MCF 10A (cell line): ENCODE measurements at regions of chr11 and their contacts with region 1.

Region 1: GRCh38 chr11:103108933-103109817 is at the start of gene DYNC2H1:
- DNase-seq: peak; percentile 87
- H3K4me3 Mint-ChIP-seq: peak within 1 kb of the TSS; percentile 82
- H3K27ac Mint-ChIP-seq: peak within 1 kb of the TSS; percentile 95
- H3K4me1 Mint-ChIP-seq: peaks cover 13% of the 10 kb centered on the region
- H3K27me3 Mint-ChIP-seq: no peaks in the 10 kb centered on the region
- CTCF ChIP-seq: peak; percentile 29
- total RNA-seq, gene DYNC2H1: 23.0 and 23.5 TPM in 2 replicates

Region 2: GRCh38 chr11:102868339-102868738 is 240.8 kb before region 1 on chr11:
- CTCF ChIA-PET with region 1: no interaction called
- POLR2A ChIA-PET with region 1: no interaction called
- intact Hi-C with region 1: no loop called
- DNase-seq: peak; percentile 51
- H3K4me3 Mint-ChIP-seq: no peak overlapping the region
- H3K27ac Mint-ChIP-seq: no peak overlapping the region
- H3K4me1 Mint-ChIP-seq: no peaks in the 10 kb centered on the region
- H3K27me3 Mint-ChIP-seq: no peaks in the 10 kb centered on the region
- CTCF ChIP-seq: no peak

Region 3: DNA sequence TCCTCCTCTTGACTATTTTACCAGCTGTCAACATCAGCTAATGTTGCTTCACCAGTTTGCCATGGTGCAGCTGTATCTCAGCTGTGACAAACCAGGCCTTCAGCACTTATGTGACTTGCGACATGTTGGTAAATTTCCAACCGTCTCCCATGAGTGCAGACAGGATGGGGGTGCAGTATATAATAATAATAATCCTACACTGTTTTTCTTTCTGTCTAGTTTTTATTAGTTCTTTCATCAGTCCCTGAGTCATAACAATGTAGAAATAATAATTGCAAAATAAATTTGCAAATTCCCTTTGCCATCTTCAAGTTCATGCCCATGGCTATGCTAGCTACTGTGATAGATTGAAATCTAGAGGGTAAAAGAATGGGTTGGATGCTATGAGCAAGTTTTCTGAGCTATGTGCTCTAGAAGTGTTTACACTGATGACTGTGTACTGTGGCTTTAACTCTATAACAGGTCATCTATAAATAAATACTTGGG is 158.5 kb before region 1 on chr11:
- CTCF ChIA-PET with region 1: no interaction called
- POLR2A ChIA-PET with region 1: no interaction called
- intact Hi-C with region 1: no loop called
- DNase-seq: peak; percentile 76
- H3K4me3 Mint-ChIP-seq: no peak overlapping the region
- H3K27ac Mint-ChIP-seq: peak overlapping the region; percentile 37
- H3K4me1 Mint-ChIP-seq: peaks cover 10% of the 10 kb centered on the region
- H3K27me3 Mint-ChIP-seq: no peaks in the 10 kb centered on the region
- CTCF ChIP-seq: no peak

Region 4: GRCh38 chr11:103085758-103086365 is 23.3 kb before region 1 on chr11:
- CTCF ChIA-PET with region 1: interaction called, 44 read pairs
- POLR2A ChIA-PET with region 1: interaction called, 300 read pairs
- intact Hi-C with region 1: no loop called
- DNase-seq: no peak
- H3K4me3 Mint-ChIP-seq: no peak overlapping the region
- H3K27ac Mint-ChIP-seq: peak overlapping the region; percentile 71
- H3K4me1 Mint-ChIP-seq: peaks cover 26% of the 10 kb centered on the region
- H3K27me3 Mint-ChIP-seq: no peaks in the 10 kb centered on the region
- CTCF ChIP-seq: no peak

Region 5: GRCh38 chr11:103091801-103092524 is 17.2 kb before region 1 on chr11 and contains the start of gene DCUN1D5:
- CTCF ChIA-PET with region 1: interaction called, 44 read pairs
- POLR2A ChIA-PET with region 1: interaction called, 300 read pairs
- intact Hi-C with region 1: loop called (anchors 1 kb)
- DNase-seq: peak; percentile 95
- H3K4me3 Mint-ChIP-seq: peak within 1 kb of the TSS; percentile 79
- H3K27ac Mint-ChIP-seq: peak within 1 kb of the TSS; percentile 92
- H3K4me1 Mint-ChIP-seq: peaks cover 14% of the 10 kb centered on the region
- H3K27me3 Mint-ChIP-seq: no peaks in the 10 kb centered on the region
- CTCF ChIP-seq: no peak
- total RNA-seq, gene DCUN1D5: 53.8 and 87.4 TPM in 2 replicates

Region 6: GRCh38 chr11:103097279-103097678 is 11.9 kb before region 1 on chr11:
- CTCF ChIA-PET with region 1: interaction called, 44 read pairs
- POLR2A ChIA-PET with region 1: interaction called, 300 read pairs
- intact Hi-C with region 1: loop called (anchors 1 kb)
- DNase-seq: no peak
- H3K4me3 Mint-ChIP-seq: no peak overlapping the region
- H3K27ac Mint-ChIP-seq: no peak overlapping the region
- H3K4me1 Mint-ChIP-seq: no peaks in the 10 kb centered on the region
- H3K27me3 Mint-ChIP-seq: no peaks in the 10 kb centered on the region
- CTCF ChIP-seq: no peak